ENCODE measurements at regions of chr1 and their contacts with region 1.

Region 1: DNA sequence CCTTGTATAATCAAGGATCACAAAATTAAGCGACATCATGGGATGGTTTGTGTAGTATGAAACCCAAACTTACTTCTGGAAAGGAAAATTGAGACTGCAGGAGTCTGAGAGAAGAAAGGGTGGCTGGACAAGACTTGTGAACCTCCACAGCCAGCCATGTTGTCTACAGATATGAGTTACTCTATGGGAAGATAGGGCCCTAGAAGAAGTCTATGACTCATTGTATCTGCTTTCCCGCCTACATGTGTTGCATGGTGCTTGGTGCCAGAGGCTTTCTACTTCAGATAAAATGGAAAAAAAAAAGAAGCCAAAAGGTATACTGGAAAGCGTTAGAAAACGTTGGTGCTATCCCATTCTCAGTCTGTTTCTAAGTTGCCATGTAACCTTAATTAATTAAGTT is 18.7 kb upstream of the OR6N2 start:
- DNase-seq: no peak
- ATAC-seq: no peak
- H3K4me3 ChIP-seq: no peak overlapping the region
- H3K4me3 Mint-ChIP-seq: no peak overlapping the region
- H3K27ac ChIP-seq: no peak overlapping the region
- H3K27ac Mint-ChIP-seq: no peak overlapping the region
- H3K4me1 ChIP-seq: no peaks in the 10 kb centered on the region
- H3K4me1 Mint-ChIP-seq: no peaks in the 10 kb centered on the region
- H3K27me3 ChIP-seq: no peaks in the 10 kb centered on the region
- H3K27me3 Mint-ChIP-seq: peaks cover 17% of the 10 kb centered on the region
- CTCF ChIP-seq: no peak

Region 2: DNA sequence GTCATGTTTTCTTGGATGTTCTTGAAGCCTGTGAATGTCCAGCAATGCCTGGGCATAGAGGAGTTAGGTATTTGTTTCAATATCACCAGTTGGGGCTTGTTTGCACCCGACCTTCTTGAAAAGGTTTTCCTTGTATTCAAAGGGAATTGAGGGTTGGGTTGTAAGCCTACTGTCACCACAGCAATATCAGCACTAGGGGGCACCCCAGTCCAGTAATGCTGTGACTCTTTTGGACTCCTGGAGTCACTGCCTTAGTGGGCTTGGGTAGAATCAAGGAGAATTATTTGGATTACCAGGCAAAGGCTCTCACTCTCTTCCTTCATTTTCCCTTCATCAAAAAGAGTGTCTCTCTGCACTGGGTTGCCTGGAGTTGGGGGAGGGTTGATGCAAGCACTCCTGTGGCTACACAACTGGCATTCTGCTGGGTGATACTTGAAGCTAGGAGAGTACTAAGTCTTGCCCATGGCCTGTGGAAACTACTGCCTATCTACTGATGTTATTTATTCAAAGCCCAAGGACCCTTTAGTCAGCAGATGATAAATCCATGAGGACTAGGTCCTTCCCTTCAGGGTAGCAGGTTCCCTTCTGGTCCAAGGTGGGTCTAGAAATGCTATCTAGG is 293.2 kb before region 1 on chr1:
- CTCF ChIA-PET with region 1: no interaction called
- POLR2A ChIA-PET with region 1: no interaction called
- intact Hi-C with region 1: loop called in 1 of 2 experiments (anchors 5 kb)
- DNase-seq: peak in 6 of 9 experiments; percentile 2 to 53 (median 26)
- ATAC-seq: no peak
- H3K4me3 ChIP-seq: no peak overlapping the region
- H3K4me3 Mint-ChIP-seq: no peak overlapping the region
- H3K27ac ChIP-seq: no peak overlapping the region
- H3K27ac Mint-ChIP-seq: peak overlapping the region; percentile 20
- H3K4me1 ChIP-seq: no peaks in the 10 kb centered on the region
- H3K4me1 Mint-ChIP-seq: no peaks in the 10 kb centered on the region
- H3K27me3 ChIP-seq: peaks cover 0 to 1% of the 10 kb centered on the region in 2 experiments
- H3K27me3 Mint-ChIP-seq: peaks cover 14% of the 10 kb centered on the region
- CTCF ChIP-seq: peak; percentile 24

Region 3: DNA sequence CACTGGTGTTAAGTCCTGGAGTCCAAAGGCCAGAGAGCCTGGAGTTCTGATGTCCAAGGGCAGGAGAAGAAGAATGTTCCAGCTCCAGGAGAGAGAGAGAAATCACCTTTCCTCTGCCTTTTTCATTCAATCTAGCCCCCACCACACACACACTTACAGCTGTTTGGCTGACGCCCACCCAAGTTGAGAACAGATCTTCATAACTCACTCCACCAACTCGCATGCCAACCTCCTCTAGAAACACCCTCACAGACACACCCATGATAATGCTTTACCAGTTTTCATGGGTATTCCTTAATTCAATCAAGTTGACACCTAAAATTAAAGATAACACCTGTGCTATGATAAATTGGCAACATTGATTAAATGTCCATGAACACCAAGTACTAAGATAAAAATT is 73.5 kb after region 1 on chr1:
- CTCF ChIA-PET with region 1: no interaction called
- POLR2A ChIA-PET with region 1: no interaction called
- intact Hi-C with region 1: no loop called
- DNase-seq: no peak
- ATAC-seq: no peak
- H3K4me3 ChIP-seq: no peak overlapping the region
- H3K4me3 Mint-ChIP-seq: no peak overlapping the region
- H3K27ac ChIP-seq: no peak overlapping the region
- H3K27ac Mint-ChIP-seq: no peak overlapping the region
- H3K4me1 ChIP-seq: no peaks in the 10 kb centered on the region
- H3K4me1 Mint-ChIP-seq: no peaks in the 10 kb centered on the region
- H3K27me3 ChIP-seq: no peaks in the 10 kb centered on the region
- H3K27me3 Mint-ChIP-seq: peaks cover 16% of the 10 kb centered on the region
- CTCF ChIP-seq: no peak